ENCODE measurements at regions of chr16 and their contacts with region 1.

Region 1: DNA sequence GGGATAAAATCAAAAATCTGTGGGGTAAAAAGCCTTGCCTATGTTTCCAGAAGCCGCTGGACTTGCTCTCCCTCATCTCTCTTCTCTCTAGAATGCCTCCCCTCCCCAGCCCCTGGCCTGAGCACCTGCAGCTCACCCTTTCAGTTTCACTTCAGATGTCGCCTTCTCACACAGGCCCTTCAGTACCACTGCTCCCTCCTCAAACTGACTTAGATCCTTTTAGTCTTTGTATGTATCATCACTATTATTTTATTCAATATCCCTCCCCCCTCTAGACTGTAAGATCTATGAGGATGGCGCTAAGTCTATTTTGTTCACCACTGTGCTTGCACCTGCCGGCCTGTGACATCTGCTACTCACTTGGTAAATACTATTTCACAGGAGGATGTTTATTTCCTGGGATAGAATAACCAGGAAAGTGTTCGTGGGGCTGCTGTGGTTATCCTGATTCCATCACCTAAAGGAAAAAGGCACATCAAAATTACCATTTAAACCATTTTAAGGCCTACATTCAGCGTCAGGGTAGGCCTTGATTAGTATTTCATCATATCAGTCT is 122.3 kb downstream of the MRTFB start:
- DNase-seq: peak; percentile 85
- H3K4me3 Mint-ChIP-seq: peak overlapping the region; percentile 80
- H3K27ac Mint-ChIP-seq: peak overlapping the region; percentile 85
- H3K4me1 Mint-ChIP-seq: peaks cover 14% of the 10 kb centered on the region
- H3K27me3 Mint-ChIP-seq: no peaks in the 10 kb centered on the region

Region 2: GRCh38 chr16:14070877-14071575 is 122.4 kb before region 1 on chr16 and contains the start of gene MRTFB:
- intact Hi-C with region 1: loop called (anchors 10 kb)
- DNase-seq: peak; percentile 95
- H3K4me3 Mint-ChIP-seq: peak within 1 kb of the TSS; percentile 91
- H3K27ac Mint-ChIP-seq: peak within 1 kb of the TSS; percentile 82
- H3K4me1 Mint-ChIP-seq: peaks cover 10% of the 10 kb centered on the region
- H3K27me3 Mint-ChIP-seq: no peaks in the 10 kb centered on the region
- total RNA-seq, gene MRTFB: 13.1 and 15.0 TPM in 2 replicates

Region 3: DNA sequence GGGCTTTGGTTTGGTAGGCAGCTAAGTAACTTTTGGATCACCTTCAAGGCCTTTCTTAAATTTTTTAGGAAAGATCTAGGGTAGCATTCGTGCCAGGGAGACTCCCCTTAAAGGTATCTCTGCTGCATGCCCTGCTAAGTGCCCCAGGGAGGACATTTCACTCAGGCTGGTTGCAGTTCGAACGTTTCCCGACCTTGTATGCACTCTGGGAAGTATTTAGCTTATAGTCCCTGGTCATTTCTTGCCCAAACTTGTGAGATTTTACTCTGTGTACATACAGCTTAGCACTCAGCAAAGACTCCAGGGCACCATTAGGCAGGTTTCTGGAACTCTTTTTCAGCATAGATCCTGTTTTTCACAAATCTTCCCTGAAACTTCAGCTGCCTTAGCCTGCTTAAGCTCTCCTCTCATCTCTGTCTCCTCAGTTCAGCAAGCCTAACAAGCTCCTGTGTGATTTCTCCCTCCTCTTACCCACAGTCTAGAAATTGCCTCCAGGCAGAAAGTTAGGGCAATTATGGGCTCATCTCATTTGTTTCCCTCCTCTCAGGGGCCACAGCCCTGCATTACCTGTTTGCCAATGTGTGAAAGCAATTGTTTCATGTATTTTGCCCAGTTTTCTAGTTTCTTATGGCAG is 37.7 kb before region 1 on chr16:
- intact Hi-C with region 1: loop called (anchors 5 kb)
- DNase-seq: no peak
- H3K4me3 Mint-ChIP-seq: no peak overlapping the region
- H3K27ac Mint-ChIP-seq: no peak overlapping the region
- H3K4me1 Mint-ChIP-seq: no peaks in the 10 kb centered on the region
- H3K27me3 Mint-ChIP-seq: no peaks in the 10 kb centered on the region